T-cell (primary cell): ENCODE measurements at regions of chr3 and their contacts with region 1.

Region 1: GRCh38 chr3:86221601-86222000 is 769.3 kb downstream of the VGLL3 start:
- DNase-seq: no peak
- ATAC-seq: no peak
- H3K4me3 ChIP-seq: no peak overlapping the region
- H3K4me3 Mint-ChIP-seq: no peak overlapping the region
- H3K27ac ChIP-seq: no peak overlapping the region
- H3K27ac Mint-ChIP-seq: no peak overlapping the region
- H3K4me1 ChIP-seq: no peaks in the 10 kb centered on the region
- H3K4me1 Mint-ChIP-seq: no peaks in the 10 kb centered on the region
- H3K27me3 ChIP-seq: no peaks in the 10 kb centered on the region
- H3K27me3 Mint-ChIP-seq: no peaks in the 10 kb centered on the region

Region 2: DNA sequence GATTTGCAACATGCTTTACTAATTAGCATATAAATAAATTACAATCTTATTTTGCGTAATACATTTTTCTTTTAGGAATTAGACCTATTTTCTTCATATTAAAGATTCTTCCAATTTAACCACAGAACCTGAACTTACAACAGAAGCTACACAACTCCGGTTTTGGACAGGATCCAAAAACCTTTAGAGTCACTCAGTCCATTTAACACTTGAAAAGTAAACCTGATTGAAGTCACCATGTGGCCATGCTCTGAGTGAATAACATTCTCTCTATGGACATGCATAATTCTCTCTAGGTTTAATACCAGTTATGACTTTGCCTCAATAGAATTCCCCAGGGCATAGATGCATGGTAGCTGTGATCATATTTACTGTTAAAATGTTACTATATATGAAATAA is 18.3 kb after region 1 on chr3:
- CTCF ChIA-PET with region 1: no interaction called
- POLR2A ChIA-PET with region 1: interaction called in 1 of 2 experiments, 11 read pairs
- DNase-seq: no peak
- ATAC-seq: no peak
- H3K4me3 ChIP-seq: no peak overlapping the region
- H3K4me3 Mint-ChIP-seq: no peak overlapping the region
- H3K27ac ChIP-seq: no peak overlapping the region
- H3K27ac Mint-ChIP-seq: no peak overlapping the region
- H3K4me1 ChIP-seq: no peaks in the 10 kb centered on the region
- H3K4me1 Mint-ChIP-seq: no peaks in the 10 kb centered on the region
- H3K27me3 ChIP-seq: no peaks in the 10 kb centered on the region
- H3K27me3 Mint-ChIP-seq: no peaks in the 10 kb centered on the region

Region 3: DNA sequence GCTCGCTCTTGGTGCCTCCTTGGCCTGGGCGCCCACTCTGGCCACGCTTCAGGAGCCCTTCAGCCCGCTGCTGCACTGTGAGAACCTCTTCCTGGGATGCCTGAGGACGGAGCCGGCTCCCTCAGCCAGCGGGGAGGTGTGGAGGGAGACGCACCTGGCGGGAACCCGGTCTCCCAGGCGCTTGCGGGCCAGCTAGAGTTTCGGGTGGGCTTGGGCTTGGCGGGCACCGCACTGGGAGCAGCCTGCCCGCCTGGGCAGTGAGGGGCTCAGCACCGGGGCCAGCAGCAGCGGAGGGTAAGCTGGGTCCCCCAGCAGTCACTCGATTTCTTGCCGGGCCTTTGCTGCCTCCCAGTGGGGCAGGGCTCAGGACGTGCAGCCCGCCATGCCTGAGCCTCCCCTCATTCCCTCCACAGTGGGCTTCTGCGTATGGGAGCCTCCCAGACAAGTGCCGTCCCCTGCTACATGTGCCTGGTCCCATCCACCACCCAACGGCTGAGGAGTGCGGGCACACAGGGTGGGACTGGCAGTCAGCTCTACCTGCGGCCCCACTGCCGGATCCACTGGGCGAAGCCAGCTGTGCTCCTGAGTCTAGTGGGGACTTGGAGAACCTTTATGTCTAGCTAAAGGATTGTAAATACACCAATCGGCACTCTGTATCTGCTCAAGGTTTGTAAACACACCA is 60.6 kb after region 1 on chr3:
- CTCF ChIA-PET with region 1: no interaction called
- POLR2A ChIA-PET with region 1: no interaction called
- DNase-seq: no peak
- ATAC-seq: no peak
- H3K4me3 ChIP-seq: no peak overlapping the region
- H3K4me3 Mint-ChIP-seq: no peak overlapping the region
- H3K27ac ChIP-seq: no peak overlapping the region
- H3K27ac Mint-ChIP-seq: no peak overlapping the region
- H3K4me1 ChIP-seq: no peaks in the 10 kb centered on the region
- H3K4me1 Mint-ChIP-seq: no peaks in the 10 kb centered on the region
- H3K27me3 ChIP-seq: no peaks in the 10 kb centered on the region
- H3K27me3 Mint-ChIP-seq: no peaks in the 10 kb centered on the region